ENCODE measurements at regions of chr15 and their contacts with region 1.

Region 1: DNA sequence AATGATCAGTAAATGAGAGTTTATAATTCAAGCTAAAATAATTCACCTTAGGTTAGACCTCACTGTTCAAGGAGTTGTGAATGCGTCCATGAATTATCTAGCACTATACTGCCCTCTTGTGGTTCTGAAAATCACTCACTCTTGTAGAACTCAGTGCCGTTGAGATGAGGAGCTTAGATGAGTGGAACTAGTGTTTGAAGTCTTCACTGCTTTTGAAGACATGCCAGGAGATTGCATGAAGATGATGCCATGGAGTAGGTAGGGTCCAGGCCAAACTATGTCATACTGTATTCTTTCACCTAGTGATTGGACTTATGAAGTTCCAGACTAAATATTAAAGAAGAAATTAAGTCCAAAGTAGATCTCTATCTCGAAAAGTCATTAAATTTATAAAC is 28.8 kb downstream of the LYSMD4 start:
- DNase-seq: peak; percentile 79
- ATAC-seq: peak; percentile 96
- H3K4me3 ChIP-seq: no peak overlapping the region
- H3K27ac ChIP-seq: no peak overlapping the region
- H3K4me1 ChIP-seq: peaks cover 27% of the 10 kb centered on the region
- H3K27me3 ChIP-seq: no peaks in the 10 kb centered on the region
- CTCF ChIP-seq: peak; percentile 65 to 84 (median 77)
- EP300 ChIP-seq: no peak
- POLR2A ChIP-seq: peak; percentile 36; the same call in 1 of the 2 replicates
- RAD21 ChIP-seq: peak; percentile 94

Region 2: DNA sequence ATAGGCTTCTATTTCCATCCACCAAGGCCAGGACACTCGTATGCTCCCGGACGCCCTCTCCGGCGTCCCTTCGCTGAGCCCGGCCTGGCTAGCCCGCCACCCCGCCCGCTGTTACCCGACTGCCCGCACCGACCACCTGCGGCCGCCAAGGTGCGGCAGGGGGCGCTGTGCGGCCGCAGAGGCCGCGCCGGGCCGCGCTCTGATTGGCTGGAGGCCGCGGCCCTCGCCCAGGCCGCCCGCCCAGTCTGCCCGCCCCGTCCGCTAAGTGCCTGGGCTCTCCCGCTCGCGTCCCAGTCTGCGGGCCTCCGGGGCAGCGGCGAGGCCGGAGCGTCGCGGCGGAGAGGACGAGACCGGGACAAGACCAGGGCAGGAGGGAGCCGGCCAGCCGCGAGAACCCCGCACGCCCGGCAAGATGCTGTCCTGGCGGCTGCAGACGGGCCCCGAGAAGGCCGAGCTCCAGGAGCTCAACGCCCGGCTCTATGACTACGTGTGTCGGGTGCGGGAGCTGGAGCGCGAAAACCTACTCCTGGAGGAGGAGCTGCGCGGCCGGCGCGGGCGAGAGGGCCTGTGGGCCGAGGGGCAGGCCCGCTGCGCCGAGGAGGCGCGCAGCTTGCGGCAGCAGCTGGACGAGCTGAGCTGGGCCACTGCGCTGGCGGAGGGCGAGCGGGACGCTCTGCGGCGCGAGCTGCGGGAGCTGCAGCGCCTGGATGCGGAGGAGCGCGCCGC is 599.5 kb before region 1 on chr15 and contains the start of gene SYNM:
- CTCF ChIA-PET with region 1: interaction called, 5 read pairs
- POLR2A ChIA-PET with region 1: no interaction called
- RAD21 ChIA-PET with region 1: interaction called, 10 read pairs
- SMC1A ChIA-PET with region 1: interaction called, 4 read pairs
- in situ Hi-C with region 1: no loop called
- intact Hi-C with region 1: no loop called
- DNase-seq: no peak
- ATAC-seq: peak; percentile 85
- H3K4me3 ChIP-seq: peak within 1 kb of the TSS; percentile 65
- H3K27ac ChIP-seq: no peak within 1 kb of the TSS
- H3K4me1 ChIP-seq: peaks cover 14% of the 10 kb centered on the region
- H3K27me3 ChIP-seq: peaks cover 0 to 10% of the 10 kb centered on the region in 2 experiments; a peak in 1 of 4 replicates
- CTCF ChIP-seq: peak; percentile 56 to 68 (median 67); a peak in 5 of 6 replicates
- EP300 ChIP-seq: no peak
- POLR2A ChIP-seq: peak; percentile 48; the same call in 1 of the 2 replicates
- RAD21 ChIP-seq: peak; percentile 68
- polyA plus RNA-seq, gene SYNM: 0.14 to 0.31 TPM

Region 3: DNA sequence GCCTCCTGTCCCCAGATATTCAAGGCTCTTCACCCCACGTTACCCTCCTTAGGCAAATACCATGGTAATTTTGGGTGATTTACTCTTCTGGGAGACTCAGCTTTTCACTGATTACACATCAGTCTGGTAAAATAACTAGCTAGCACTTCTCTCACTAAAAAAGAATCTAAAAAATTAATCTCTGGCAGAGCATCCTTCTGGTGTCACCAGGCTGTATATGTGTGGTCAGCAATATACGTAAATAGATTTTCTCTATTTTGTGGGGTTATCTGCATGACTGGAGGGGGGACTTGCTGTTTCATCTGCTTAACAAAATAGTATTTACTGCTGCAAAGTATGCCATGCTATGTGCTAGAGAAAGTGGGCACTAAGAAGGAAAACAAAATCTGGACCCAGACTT is 408.1 kb before region 1 on chr15:
- CTCF ChIA-PET with region 1: interaction called, 11 read pairs
- POLR2A ChIA-PET with region 1: no interaction called
- RAD21 ChIA-PET with region 1: interaction called, 11 read pairs
- SMC1A ChIA-PET with region 1: interaction called, 7 read pairs
- in situ Hi-C with region 1: no loop called
- intact Hi-C with region 1: no loop called
- DNase-seq: no peak
- ATAC-seq: no peak
- H3K4me3 ChIP-seq: no peak overlapping the region
- H3K27ac ChIP-seq: no peak overlapping the region
- H3K4me1 ChIP-seq: no peaks in the 10 kb centered on the region
- H3K27me3 ChIP-seq: no peaks in the 10 kb centered on the region
- CTCF ChIP-seq: no peak
- EP300 ChIP-seq: no peak
- POLR2A ChIP-seq: no peak
- RAD21 ChIP-seq: no peak

Region 4: DNA sequence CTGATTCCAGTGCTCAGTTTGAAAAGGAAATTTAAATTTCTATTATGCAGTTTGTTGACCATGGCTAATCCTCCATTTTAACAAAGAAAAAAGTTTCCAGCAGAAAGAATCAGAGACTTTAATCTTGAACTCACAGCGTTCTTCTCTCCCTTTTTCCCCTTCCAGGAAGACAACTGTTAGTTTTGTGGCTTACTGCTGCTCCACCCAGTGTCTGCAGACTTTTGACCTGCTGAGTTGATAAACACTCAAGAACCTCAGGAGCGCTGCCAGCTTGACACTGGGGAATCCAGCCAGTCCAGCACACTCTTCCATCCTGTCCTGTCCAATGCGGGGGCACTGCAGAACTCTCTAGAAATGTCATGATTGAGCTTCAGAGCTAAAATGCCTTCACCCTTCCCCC is 318.6 kb before region 1 on chr15:
- CTCF ChIA-PET with region 1: interaction called, 11 read pairs
- POLR2A ChIA-PET with region 1: no interaction called
- RAD21 ChIA-PET with region 1: interaction called, 5 read pairs
- SMC1A ChIA-PET with region 1: interaction called, 8 read pairs
- in situ Hi-C with region 1: no loop called
- intact Hi-C with region 1: no loop called
- DNase-seq: no peak
- ATAC-seq: no peak
- H3K4me3 ChIP-seq: no peak overlapping the region
- H3K27ac ChIP-seq: no peak overlapping the region
- H3K4me1 ChIP-seq: no peaks in the 10 kb centered on the region
- H3K27me3 ChIP-seq: no peaks in the 10 kb centered on the region
- CTCF ChIP-seq: no peak
- EP300 ChIP-seq: no peak
- POLR2A ChIP-seq: no peak
- RAD21 ChIP-seq: no peak

Region 5: GRCh38 chr15:99571299-99571698 is 133.1 kb before region 1 on chr15:
- CTCF ChIA-PET with region 1: interaction called, 55 read pairs
- POLR2A ChIA-PET with region 1: interaction called, 4 read pairs
- RAD21 ChIA-PET with region 1: interaction called, 48 read pairs
- SMC1A ChIA-PET with region 1: interaction called, 43 read pairs
- in situ Hi-C with region 1: no loop called
- intact Hi-C with region 1: loop called (anchors 1 kb)
- DNase-seq: no peak
- ATAC-seq: peak; percentile 46
- H3K4me3 ChIP-seq: no peak overlapping the region
- H3K27ac ChIP-seq: no peak overlapping the region
- H3K4me1 ChIP-seq: no peaks in the 10 kb centered on the region
- H3K27me3 ChIP-seq: no peaks in the 10 kb centered on the region
- CTCF ChIP-seq: no peak
- EP300 ChIP-seq: no peak
- POLR2A ChIP-seq: no peak
- RAD21 ChIP-seq: no peak

Region 6: DNA sequence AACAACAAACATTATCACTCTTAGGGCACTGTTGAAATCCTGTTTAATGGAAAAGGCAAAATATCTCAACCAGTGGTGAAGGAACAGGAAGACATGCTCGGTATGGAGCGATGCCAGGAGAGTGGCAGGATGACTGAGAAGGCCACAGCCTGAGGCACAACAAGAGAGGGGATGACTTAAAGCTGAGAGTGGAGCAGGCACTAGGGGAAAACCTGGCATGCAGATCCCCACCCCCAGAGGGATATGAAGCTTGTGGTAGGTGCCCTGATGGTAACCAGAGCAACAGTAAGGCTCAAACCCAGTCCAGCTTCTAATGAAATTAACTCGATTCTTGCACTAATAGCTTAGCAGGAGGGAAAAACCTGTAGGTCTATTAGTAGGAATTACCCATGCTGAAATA is 11.6 kb before region 1 on chr15:
- CTCF ChIA-PET with region 1: interaction called, 18 read pairs
- POLR2A ChIA-PET with region 1: no interaction called
- RAD21 ChIA-PET with region 1: interaction called, 11 read pairs
- SMC1A ChIA-PET with region 1: interaction called, 17 read pairs
- in situ Hi-C with region 1: no loop called
- intact Hi-C with region 1: no loop called
- DNase-seq: no peak
- ATAC-seq: peak; percentile 43; the same call in 2 of the 3 replicates
- H3K4me3 ChIP-seq: no peak overlapping the region
- H3K27ac ChIP-seq: no peak overlapping the region
- H3K4me1 ChIP-seq: no peaks in the 10 kb centered on the region
- H3K27me3 ChIP-seq: no peaks in the 10 kb centered on the region
- CTCF ChIP-seq: no peak
- EP300 ChIP-seq: no peak
- POLR2A ChIP-seq: no peak
- RAD21 ChIP-seq: no peak